PC-9 (cell line): ENCODE measurements at regions of chr18 and their contacts with region 1.

Region 1: DNA sequence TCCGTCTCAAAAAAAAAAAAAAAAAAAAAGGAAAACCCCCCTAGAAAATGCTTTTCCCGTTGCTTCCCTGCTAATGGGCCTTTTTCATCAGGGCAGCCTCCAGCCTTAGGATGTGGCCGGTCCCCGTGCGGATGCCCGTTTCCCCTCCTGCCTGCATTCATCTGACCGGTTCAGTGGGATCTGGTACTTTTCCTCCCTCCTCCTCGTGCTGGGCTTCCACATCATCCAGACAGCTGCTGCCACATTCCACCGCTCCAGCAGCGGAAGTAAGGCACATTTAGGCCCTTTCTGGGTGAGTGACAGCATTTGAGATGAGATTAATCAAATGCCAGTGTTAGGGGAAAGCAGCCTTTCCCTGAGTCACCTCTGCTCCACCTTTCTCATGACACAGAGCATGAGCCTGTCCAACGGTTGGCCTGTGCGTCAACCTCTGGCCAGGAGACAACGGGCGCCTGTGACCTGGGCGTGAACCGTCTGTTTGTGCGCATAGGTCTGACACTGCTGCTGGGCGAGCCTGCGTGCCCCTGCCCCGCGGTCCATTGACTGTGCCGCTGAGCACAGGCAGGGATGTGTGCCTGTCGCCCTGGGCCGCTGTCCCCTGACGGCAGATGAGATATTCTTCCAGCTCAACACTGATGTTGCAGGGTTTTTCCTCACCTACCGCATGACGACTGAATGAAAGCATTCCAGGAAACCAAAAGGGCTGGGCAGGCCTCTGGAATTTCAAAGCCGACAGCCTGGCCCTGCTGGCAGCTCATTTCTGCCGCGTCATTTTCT is 174.0 kb downstream of the TGIF1 start:
- DNase-seq: peak; percentile 94 to 98
- H3K4me3 ChIP-seq: peak overlapping the region; percentile 58
- H3K27ac ChIP-seq: peak overlapping the region; percentile 100
- H3K4me1 ChIP-seq: peaks cover 62% of the 10 kb centered on the region
- H3K27me3 ChIP-seq: no peaks in the 10 kb centered on the region
- CTCF ChIP-seq: no peak

Region 2: DNA sequence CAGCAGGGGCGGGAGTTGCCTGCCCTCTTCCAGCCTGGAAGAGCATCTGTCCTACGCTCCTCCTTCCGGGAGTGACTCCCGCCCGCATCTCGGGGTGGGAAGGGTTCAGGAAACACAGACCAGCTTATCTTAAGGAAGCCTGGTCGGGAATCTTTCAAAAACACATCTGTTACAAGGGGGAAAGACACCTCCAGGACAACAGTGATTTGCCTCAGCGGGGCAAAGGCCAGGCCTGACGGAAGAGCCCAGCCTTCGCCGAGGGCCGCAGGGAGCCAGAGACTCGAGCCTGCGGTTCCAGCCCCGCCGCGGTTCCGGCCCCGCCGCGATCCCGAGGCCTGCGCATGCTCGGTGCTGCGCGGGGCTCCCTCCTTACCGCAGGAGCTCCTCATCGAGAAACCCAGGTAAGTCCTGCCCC is 212.1 kb before region 1 on chr18:
- CTCF ChIA-PET with region 1: no interaction called
- POLR2A ChIA-PET with region 1: interaction called, 32 read pairs
- intact Hi-C with region 1: no loop called
- DNase-seq: peak; percentile 72 to 86
- H3K4me3 ChIP-seq: peak overlapping the region; percentile 68
- H3K27ac ChIP-seq: peak overlapping the region; percentile 96
- H3K4me1 ChIP-seq: peaks cover 58% of the 10 kb centered on the region
- H3K27me3 ChIP-seq: no peaks in the 10 kb centered on the region
- CTCF ChIP-seq: no peak

Region 3: DNA sequence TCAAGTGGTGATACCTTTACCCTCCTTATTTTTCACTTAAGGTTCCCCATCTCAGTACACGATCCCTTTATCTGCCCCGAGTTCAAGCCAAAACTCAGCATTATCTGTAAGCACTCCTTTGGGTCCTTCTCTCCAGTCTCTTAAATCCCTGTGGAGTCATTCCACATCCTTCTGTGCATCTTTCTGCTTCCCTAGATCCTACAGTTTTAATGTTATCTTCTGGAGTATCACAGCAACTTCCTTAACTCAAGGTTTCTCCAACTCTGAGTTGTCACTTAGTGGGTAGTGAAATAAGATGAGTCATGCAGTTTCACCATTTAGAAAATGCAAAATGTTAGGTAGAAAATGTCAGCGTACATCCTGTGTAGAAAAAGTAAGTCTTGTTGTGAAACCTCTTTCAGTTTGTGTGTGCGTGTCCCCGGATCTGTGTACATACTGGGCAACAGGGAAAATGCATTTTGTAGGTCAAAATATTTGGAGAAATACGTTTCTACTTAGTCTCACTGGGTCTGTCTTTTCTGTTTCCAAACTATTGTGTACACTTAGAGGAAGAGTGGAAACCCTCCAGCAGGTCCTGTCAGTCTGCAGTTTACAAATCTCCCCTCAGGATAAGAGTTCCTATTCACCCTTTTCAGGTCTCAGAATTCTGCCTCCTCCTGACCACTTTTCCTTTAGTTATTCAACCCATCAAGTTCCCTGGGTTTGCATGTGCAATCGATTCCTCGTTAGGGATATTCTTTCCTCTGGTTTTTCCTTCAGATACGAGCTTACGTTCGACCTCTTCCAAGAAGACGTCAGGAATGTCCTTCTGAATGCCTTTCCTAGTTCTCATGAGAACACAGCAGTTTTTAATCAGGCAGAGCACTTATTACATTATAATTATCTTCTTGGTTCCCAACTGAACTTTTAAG is 19.2 kb before region 1 on chr18:
- CTCF ChIA-PET with region 1: interaction called, 3 read pairs
- POLR2A ChIA-PET with region 1: interaction called, 63 read pairs
- intact Hi-C with region 1: loop called (anchors 1 kb)
- DNase-seq: peak in 1 of 2 experiments; percentile 97
- H3K4me3 ChIP-seq: peak overlapping the region; percentile 72
- H3K27ac ChIP-seq: peak overlapping the region; percentile 100
- H3K4me1 ChIP-seq: peaks cover 32% of the 10 kb centered on the region
- H3K27me3 ChIP-seq: no peaks in the 10 kb centered on the region
- CTCF ChIP-seq: no peak

Region 4: GRCh38 chr18:3794537-3795348 is 170.8 kb after region 1 on chr18:
- CTCF ChIA-PET with region 1: interaction called, 7 read pairs
- POLR2A ChIA-PET with region 1: no interaction called
- intact Hi-C with region 1: loop called (anchors 10 kb)
- DNase-seq: peak; percentile 87 to 88
- H3K4me3 ChIP-seq: peak overlapping the region; percentile 20; the same call in 1 of the 2 replicates
- H3K27ac ChIP-seq: peak overlapping the region; percentile 93
- H3K4me1 ChIP-seq: peaks cover 26% of the 10 kb centered on the region
- H3K27me3 ChIP-seq: no peaks in the 10 kb centered on the region
- CTCF ChIP-seq: no peak; the same call in 1 of the 2 replicates

Region 5: GRCh38 chr18:3832025-3832638 is 208.2 kb after region 1 on chr18:
- CTCF ChIA-PET with region 1: no interaction called
- POLR2A ChIA-PET with region 1: interaction called, 36 read pairs
- intact Hi-C with region 1: no loop called
- DNase-seq: no peak
- H3K4me3 ChIP-seq: no peak overlapping the region
- H3K27ac ChIP-seq: no peak overlapping the region
- H3K4me1 ChIP-seq: no peaks in the 10 kb centered on the region
- H3K27me3 ChIP-seq: no peaks in the 10 kb centered on the region
- CTCF ChIP-seq: no peak